ENCODE measurements at regions of chr17 and their contacts with region 1.

Region 1: DNA sequence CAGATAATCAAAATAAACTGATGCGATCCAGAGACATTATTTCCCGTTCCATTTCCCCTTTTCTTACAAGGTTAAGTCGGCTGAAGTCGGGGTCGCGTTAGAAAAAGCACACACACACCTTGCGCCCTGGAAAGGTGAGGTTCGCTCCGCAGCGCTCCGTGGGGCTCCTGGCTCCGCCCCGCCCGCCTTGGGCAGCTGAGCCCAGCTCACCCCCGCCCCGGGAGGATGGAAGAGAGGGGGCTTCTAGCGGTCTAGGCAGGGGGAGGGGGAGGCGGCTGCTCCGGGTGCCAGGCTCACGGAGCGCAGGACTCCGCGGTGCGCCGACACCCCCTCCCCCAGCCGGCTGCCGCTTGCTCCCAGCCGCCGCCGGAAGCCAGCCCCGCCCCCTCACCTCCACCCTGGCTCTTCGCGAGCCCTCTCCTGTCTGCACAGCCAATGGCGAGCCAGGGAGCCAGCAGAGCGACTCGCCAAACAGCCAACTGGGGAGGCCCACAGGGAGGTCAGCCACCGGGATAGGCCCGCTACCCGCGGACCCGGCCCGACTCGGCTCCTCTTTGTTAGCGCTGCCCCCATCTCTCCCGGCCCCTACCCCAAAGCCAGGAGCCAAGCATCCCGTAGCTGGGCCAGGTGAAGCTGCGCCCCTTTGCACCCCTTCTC is 30.4 kb downstream of the FAM222B start:
- DNase-seq: peak; percentile 96 to 98 (median 98)
- H3K4me3 ChIP-seq: peak overlapping the region; percentile 82 to 95 (median 90)
- H3K27ac ChIP-seq: peak overlapping the region; percentile 90 to 97
- H3K4me1 ChIP-seq: peaks cover 18 to 51% (median 31%) of the 10 kb centered on the region in 4 experiments
- H3K27me3 ChIP-seq: no peaks in the 10 kb centered on the region

Region 2: GRCh38 chr17:28842282-28843012 is 30.2 kb after region 1 on chr17 and contains the start of gene FAM222B:
- CTCF ChIA-PET with region 1: interaction called, 5 read pairs
- POLR2A ChIA-PET with region 1: interaction called, 15 read pairs
- DNase-seq: peak; percentile 84 to 92 (median 91)
- H3K4me3 ChIP-seq: peak within 1 kb of the TSS; percentile 68 to 96 (median 83)
- H3K27ac ChIP-seq: peak within 1 kb of the TSS; percentile 84 to 87
- H3K4me1 ChIP-seq: peaks cover 5 to 18% (median 12%) of the 10 kb centered on the region in 4 experiments
- H3K27me3 ChIP-seq: no peaks in the 10 kb centered on the region

Region 3: DNA sequence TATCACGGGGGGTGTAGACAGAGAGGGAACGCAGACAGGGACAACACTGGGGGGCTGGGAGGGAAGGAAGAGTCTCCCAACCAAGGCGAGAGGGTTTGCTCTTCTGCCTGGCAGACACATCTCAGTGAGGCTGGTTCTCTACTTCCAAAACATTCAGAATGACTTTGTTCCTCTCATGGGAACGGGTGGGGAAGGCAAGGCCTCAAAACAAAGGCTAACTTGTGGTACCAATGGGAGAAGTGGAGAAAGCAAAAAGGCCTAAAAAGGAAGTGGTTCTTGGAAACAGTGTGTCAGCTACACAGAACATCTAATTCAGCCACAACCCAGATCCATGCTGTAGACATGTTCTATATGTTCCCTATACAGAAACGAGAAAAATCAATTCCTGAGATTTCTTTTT is 77.8 kb after region 1 on chr17:
- CTCF ChIA-PET with region 1: no interaction called
- POLR2A ChIA-PET with region 1: no interaction called
- DNase-seq: no peak
- H3K4me3 ChIP-seq: no peak overlapping the region
- H3K27ac ChIP-seq: no peak overlapping the region
- H3K4me1 ChIP-seq: peaks cover 6 to 36% (median 26%) of the 10 kb centered on the region in 4 experiments
- H3K27me3 ChIP-seq: no peaks in the 10 kb centered on the region

Measured in common myeloid progenitor, CD34-positive (primary cell).